CD4-positive, alpha-beta T cell (primary cell): ENCODE measurements at regions of chr9 and their contacts with region 1.

Region 1: DNA sequence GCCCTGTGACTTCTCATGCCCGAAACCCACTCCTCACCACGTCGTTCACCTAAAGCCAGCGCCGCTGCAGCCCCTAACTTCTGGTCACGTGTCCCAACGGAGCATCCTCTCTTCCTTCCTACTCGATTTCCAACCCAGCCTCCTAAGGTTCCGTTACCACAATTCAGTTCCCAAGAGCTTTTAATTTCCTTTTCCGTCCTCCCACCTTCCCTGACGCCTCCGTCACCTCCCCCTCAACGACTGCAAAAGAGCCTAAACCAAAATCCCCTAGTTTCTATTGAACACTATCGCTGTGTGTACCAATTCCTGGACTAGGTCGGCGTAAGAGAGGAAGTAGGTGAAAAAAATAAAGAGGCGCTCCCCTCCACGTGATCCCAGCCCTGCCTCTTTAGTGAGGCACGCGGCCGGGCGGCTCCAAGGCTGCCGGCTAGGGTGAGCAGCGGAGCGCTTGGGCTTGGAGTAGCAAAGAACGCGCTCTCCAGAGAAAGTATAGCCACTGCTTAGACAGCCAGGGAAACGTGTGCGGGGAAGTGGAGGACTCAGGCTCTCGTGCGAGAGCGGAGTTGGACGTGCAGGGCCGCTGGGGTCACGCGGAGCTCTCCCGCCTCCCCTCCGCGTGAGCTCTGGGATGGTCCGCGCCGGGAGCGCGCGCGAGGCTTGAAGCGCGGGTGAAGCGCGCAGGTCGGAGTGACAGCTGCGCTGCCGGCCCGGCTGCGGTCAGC is at the starts of genes CENPP and NOL8:
- DNase-seq: peak; percentile 68 to 93 (median 76)
- ATAC-seq: peak; percentile 94
- H3K4me3 ChIP-seq: peak within 1 kb of the TSS; percentile 69
- H3K4me3 Mint-ChIP-seq: peak within 1 kb of the TSS; percentile 96
- H3K27ac ChIP-seq: peak within 1 kb of the TSS; percentile 94 to 97
- H3K27ac Mint-ChIP-seq: peak within 1 kb of the TSS; percentile 94
- H3K4me1 ChIP-seq: peaks cover 13% of the 10 kb centered on the region
- H3K4me1 Mint-ChIP-seq: peaks cover 40% of the 10 kb centered on the region
- H3K27me3 ChIP-seq: no peaks in the 10 kb centered on the region
- H3K27me3 Mint-ChIP-seq: no peaks in the 10 kb centered on the region
- CTCF ChIP-seq: no peak
- total RNA-seq, gene CENPP: 4.8 TPM
- total RNA-seq, gene NOL8: 55.9 to 65.7 TPM

Region 2: DNA sequence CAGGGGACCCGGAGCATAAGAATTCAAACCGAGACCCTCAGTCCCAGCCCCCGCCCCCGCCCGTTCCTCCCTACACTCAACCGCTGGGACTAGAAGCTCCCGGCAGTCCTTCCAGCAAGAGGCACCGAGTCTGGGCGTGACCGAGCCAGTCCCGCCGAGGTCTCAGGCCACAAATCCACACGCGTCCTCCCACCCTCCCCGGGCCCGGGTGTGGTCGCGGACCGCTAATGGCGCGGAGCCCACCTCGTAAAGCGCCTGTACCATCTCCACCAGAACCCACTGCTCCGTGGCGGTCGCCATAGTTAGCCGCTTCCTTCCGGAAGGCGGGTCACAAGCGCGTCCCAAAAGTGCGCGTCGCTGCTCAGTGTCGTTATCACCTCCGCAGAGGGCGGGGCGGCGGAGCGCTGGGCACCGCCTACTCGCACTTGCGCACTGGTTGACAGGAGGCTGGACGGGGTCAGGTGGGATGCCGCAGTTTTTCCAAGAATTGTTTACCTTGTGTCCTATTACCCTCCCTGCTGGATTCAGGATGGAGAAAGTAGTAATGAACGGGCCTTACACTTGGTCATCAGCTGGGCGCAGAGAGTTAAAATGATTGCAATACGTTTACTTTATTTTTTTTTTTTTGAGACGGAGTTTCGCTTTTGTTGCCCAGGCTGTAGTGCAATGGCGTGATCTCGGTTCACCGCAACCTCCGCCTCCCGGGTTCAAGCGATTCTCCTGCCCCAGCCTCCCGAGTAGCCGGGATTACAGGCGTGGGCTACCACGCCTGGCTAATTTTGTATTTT is 210.2 kb before region 1 on chr9 and contains the start of gene SPTLC1:
- CTCF ChIA-PET with region 1: no interaction called
- POLR2A ChIA-PET with region 1: interaction called, 7 read pairs
- intact Hi-C with region 1: loop called in 1 of 2 experiments (anchors 5 kb)
- DNase-seq: peak; percentile 90 to 98 (median 92)
- ATAC-seq: peak; percentile 94
- H3K4me3 ChIP-seq: peak within 1 kb of the TSS; percentile 71
- H3K4me3 Mint-ChIP-seq: peak within 1 kb of the TSS; percentile 94
- H3K27ac ChIP-seq: peak within 1 kb of the TSS; percentile 84 to 89
- H3K27ac Mint-ChIP-seq: peak within 1 kb of the TSS; percentile 97
- H3K4me1 ChIP-seq: peaks cover 9% of the 10 kb centered on the region
- H3K4me1 Mint-ChIP-seq: peaks cover 47% of the 10 kb centered on the region
- H3K27me3 ChIP-seq: no peaks in the 10 kb centered on the region
- H3K27me3 Mint-ChIP-seq: no peaks in the 10 kb centered on the region
- CTCF ChIP-seq: no peak
- total RNA-seq, gene SPTLC1: 40.9 to 43.0 TPM

Region 3: GRCh38 chr9:92293452-92294296 is 31.8 kb before region 1 on chr9 and contains the start of gene IARS1:
- CTCF ChIA-PET with region 1: interaction called, 3 read pairs
- POLR2A ChIA-PET with region 1: interaction called, 11 read pairs
- intact Hi-C with region 1: loop called (anchors 1 to 2 kb)
- DNase-seq: peak; percentile 97 to 100 (median 99)
- ATAC-seq: peak; percentile 93
- H3K4me3 ChIP-seq: peak within 1 kb of the TSS; percentile 70
- H3K4me3 Mint-ChIP-seq: peak within 1 kb of the TSS; percentile 98
- H3K27ac ChIP-seq: peak within 1 kb of the TSS; percentile 73 to 74
- H3K27ac Mint-ChIP-seq: peak within 1 kb of the TSS; percentile 97
- H3K4me1 ChIP-seq: peaks cover 25% of the 10 kb centered on the region
- H3K4me1 Mint-ChIP-seq: peaks cover 69% of the 10 kb centered on the region
- H3K27me3 ChIP-seq: no peaks in the 10 kb centered on the region
- H3K27me3 Mint-ChIP-seq: no peaks in the 10 kb centered on the region
- CTCF ChIP-seq: no peak
- total RNA-seq, gene IARS1: 49.8 to 56.8 TPM

Region 4: GRCh38 chr9:92312887-92313623 is 12.4 kb before region 1 on chr9:
- CTCF ChIA-PET with region 1: no interaction called
- POLR2A ChIA-PET with region 1: no interaction called
- intact Hi-C with region 1: no loop called
- DNase-seq: no peak
- ATAC-seq: no peak
- H3K4me3 ChIP-seq: no peak overlapping the region
- H3K4me3 Mint-ChIP-seq: no peak overlapping the region
- H3K27ac ChIP-seq: no peak overlapping the region
- H3K27ac Mint-ChIP-seq: no peak overlapping the region
- H3K4me1 ChIP-seq: no peaks in the 10 kb centered on the region
- H3K4me1 Mint-ChIP-seq: peaks cover 35% of the 10 kb centered on the region
- H3K27me3 ChIP-seq: no peaks in the 10 kb centered on the region
- H3K27me3 Mint-ChIP-seq: no peaks in the 10 kb centered on the region
- CTCF ChIP-seq: no peak

Region 5: GRCh38 chr9:92438900-92439526 is 113.6 kb after region 1 on chr9:
- CTCF ChIA-PET with region 1: no interaction called
- POLR2A ChIA-PET with region 1: no interaction called
- intact Hi-C with region 1: loop called in 1 of 2 experiments (anchors 5 kb)
- DNase-seq: peak in 3 of 14 experiments; percentile 16 to 33 (median 19)
- ATAC-seq: no peak
- H3K4me3 ChIP-seq: no peak overlapping the region
- H3K4me3 Mint-ChIP-seq: no peak overlapping the region
- H3K27ac ChIP-seq: no peak overlapping the region
- H3K27ac Mint-ChIP-seq: no peak overlapping the region
- H3K4me1 ChIP-seq: no peaks in the 10 kb centered on the region
- H3K4me1 Mint-ChIP-seq: no peaks in the 10 kb centered on the region
- H3K27me3 ChIP-seq: no peaks in the 10 kb centered on the region
- H3K27me3 Mint-ChIP-seq: no peaks in the 10 kb centered on the region
- CTCF ChIP-seq: peak; percentile 34

Region 6: DNA sequence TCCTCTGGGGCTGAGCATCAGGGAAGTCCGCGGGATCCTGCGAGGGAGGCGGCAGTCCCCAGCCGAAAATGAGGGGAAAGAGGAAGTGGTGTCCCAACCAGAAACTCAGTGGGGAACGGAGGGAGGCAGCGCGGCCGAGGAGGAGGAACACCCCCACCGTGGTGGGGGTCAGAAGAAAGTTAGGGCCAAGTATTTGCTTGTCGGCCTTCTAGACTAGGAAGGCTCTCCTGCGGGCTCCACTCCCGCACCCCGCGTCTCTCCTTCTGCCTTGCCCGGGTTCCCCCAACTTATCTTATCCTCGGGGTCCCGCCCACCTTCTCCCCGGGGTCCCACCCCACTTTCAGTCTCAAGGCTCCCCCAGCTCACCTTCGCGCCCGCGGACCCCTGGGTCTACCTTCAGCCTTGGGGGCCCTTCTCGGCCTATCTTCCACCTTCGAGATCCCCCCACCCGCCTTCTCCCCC is 1250.4 kb after region 1 on chr9:
- CTCF ChIA-PET with region 1: no interaction called
- POLR2A ChIA-PET with region 1: no interaction called
- intact Hi-C with region 1: loop called in 1 of 2 experiments (anchors 10 kb)
- DNase-seq: peak in 13 of 14 experiments; percentile 25 to 72 (median 45)
- ATAC-seq: peak; percentile 44
- H3K4me3 ChIP-seq: peak overlapping the region; percentile 75
- H3K4me3 Mint-ChIP-seq: peak overlapping the region; percentile 95
- H3K27ac ChIP-seq: peak overlapping the region; percentile 51 to 56
- H3K27ac Mint-ChIP-seq: peak overlapping the region; percentile 95
- H3K4me1 ChIP-seq: peaks cover 33% of the 10 kb centered on the region
- H3K4me1 Mint-ChIP-seq: peaks cover 51% of the 10 kb centered on the region
- H3K27me3 ChIP-seq: no peaks in the 10 kb centered on the region
- H3K27me3 Mint-ChIP-seq: no peaks in the 10 kb centered on the region
- CTCF ChIP-seq: no peak

Region 7: DNA sequence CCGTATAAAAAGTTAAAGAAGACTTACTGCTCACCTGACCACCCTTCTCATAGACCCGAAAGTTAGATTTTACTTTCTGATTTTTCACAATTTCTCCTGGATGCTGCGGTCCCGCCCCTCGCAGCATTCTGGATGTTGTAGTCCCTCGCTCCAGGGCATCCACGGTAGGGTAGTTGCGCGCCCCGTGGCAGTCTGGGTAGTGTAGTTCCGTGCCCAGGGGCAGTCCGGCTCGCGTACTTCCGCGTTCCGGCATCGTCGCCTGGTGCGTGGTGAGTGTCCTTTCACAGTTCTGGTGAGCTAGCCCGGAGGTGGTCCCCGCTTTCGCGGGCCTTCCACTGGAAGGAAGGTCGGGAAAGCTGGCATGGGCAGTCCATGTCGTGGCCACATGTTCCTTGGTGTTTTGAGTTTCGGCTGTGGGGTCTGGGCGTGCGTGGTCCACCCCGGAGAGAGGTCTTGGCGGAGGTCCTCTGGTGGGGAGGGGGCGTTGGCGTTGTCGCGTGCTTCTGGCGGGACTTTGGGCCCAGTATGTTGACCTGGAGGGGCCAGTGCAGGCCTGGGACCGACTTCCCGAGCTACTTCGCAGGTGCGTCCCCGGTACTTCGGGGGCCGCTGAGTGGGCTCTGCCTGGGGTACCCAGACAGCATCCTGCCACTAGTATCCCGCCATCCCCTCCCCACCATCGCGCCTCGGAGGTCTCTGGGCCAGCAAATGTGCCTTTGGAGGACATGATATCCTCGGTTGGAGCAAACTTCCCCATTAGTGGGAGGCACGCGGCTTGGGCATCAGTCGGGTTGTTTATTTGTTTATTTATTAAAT is 1933.9 kb after region 1 on chr9 and contains the start of gene ZNF169:
- CTCF ChIA-PET with region 1: no interaction called
- POLR2A ChIA-PET with region 1: no interaction called
- intact Hi-C with region 1: loop called in 1 of 2 experiments (anchors 5 kb)
- DNase-seq: peak; percentile 74 to 91 (median 82)
- ATAC-seq: peak; percentile 100
- H3K4me3 ChIP-seq: peak within 1 kb of the TSS; percentile 98
- H3K4me3 Mint-ChIP-seq: peak within 1 kb of the TSS; percentile 98
- H3K27ac ChIP-seq: peak within 1 kb of the TSS; percentile 35 to 38
- H3K27ac Mint-ChIP-seq: peak within 1 kb of the TSS; percentile 88
- H3K4me1 ChIP-seq: peaks cover 21% of the 10 kb centered on the region
- H3K4me1 Mint-ChIP-seq: peaks cover 46% of the 10 kb centered on the region
- H3K27me3 ChIP-seq: peaks cover 0 to 6% of the 10 kb centered on the region in 2 experiments
- H3K27me3 Mint-ChIP-seq: peaks cover 5% of the 10 kb centered on the region
- CTCF ChIP-seq: no peak
- total RNA-seq, gene ZNF169: 3.5 to 5.1 TPM